Ovary (tissue), 10 donors: ENCODE measurements at regions of chr2 and their contacts with region 1.

Region 1: GRCh38 chr2:240560480-240561326 is 546 bp downstream of the DUSP28 start:
- DNase-seq: peak; percentile 100
- H3K4me3 ChIP-seq: peak overlapping the region; percentile 98
- H3K27ac ChIP-seq: peak overlapping the region; percentile 97 to 98
- H3K4me1 ChIP-seq: peaks cover 23% of the 10 kb centered on the region
- H3K27me3 ChIP-seq: no peaks in the 10 kb centered on the region
- CTCF ChIP-seq: peak; percentile 23 to 46 (median 42)
- EP300 ChIP-seq: no peak
- POLR2A ChIP-seq: peak; percentile 48

Region 2: DNA sequence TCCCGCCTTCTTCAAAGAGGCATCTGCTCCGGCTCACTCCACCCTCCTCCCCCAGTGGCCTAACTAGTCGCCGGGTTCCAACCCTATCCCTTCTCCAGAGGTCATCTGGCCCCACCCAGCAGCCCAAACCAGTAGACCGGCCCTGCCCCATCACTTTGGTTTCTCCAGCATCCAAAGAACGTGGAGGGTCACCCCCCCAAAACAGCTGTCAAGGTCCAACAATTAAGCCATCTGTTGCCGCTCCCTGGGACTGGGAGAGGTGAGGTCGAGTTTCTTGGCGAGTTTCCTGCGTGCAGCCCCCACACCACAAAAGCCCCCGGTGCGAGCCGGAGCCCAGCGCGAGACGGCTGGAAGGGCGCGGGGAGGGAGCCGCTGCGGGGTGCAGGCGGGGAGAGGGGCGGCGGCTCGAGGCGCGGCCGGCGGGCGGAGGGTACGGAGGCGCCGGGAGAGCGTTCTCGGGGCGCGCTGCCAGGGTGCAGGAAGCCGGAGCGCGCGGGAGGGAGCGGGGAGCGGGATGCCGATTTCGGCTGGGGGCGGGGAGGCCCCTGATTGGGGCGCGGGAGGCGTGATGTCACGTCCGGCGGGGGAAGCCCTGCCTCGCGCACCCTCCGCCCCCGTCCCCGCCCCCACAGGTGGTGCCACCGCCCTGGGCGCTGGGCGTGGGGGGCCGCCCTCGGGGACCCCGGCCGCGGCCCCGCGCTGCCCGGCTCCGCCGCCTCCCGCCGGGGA is 125.8 kb before region 1 on chr2:
- intact Hi-C with region 1: loop called in 1 of 4 experiments (anchors 5 kb)
- DNase-seq: peak; percentile 97 to 98 (median 98)
- H3K4me3 ChIP-seq: peak overlapping the region; percentile 66
- H3K27ac ChIP-seq: peak overlapping the region; percentile 79 to 91
- H3K4me1 ChIP-seq: peaks cover 17% of the 10 kb centered on the region
- H3K27me3 ChIP-seq: no peaks in the 10 kb centered on the region
- CTCF ChIP-seq: no peak
- EP300 ChIP-seq: no peak
- POLR2A ChIP-seq: peak; percentile 25

Region 3: GRCh38 chr2:240453961-240454837 is 106.5 kb before region 1 on chr2:
- intact Hi-C with region 1: loop called in 1 of 4 experiments (anchors 1 kb)
- DNase-seq: peak in 3 of 5 donors; percentile 20 to 52 (median 50)
- H3K4me3 ChIP-seq: peak overlapping the region; percentile 28
- H3K27ac ChIP-seq: peak overlapping the region in 1 of 2 donors; percentile 70
- H3K4me1 ChIP-seq: peaks cover 19% of the 10 kb centered on the region
- H3K27me3 ChIP-seq: no peaks in the 10 kb centered on the region
- CTCF ChIP-seq: no peak
- EP300 ChIP-seq: no peak
- POLR2A ChIP-seq: no peak

Region 4: DNA sequence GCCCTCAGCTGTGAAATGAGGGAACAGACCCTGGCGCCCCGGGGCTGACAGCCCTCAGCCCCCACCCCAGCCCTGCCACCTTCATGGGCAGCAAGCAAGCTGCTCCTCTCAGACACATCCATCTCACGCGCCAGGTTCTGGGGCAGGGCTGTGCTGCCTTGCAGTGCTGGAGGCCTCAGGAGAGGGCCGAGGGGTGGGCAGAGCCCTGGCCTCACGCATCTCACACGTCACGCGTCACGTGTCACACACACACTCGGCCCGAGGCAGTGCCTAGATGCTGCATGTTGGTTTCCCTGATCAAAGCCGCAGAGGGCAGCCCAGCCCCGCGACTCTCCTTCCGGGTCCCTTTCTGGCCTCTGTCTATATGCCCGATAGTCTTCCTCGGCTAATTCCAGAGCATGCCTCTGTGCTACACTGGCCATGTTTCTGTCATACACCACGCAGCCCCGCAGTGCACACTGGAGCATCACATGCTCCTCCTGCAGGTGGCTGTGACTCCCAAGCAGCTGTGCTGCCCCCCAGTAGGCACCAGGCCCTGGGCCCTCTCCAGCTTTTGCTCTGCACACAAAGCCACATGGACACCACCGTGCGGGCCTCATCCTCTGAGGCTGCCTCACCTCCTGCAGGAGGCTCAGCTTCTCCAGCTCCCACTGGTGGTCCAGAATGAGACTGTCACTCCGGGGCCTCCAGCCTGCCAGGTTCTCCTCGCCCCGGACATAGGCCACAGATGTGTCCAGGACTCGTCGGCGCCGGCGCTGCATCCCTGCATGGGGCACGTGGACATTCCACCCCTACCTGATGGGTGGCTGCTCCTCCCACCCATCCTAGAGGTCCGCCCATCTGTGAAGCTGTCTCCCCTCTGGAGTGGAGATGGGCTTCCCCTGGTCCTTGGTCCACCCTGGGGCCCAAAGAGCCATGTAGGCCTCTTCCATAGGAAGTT is 162.4 kb after region 1 on chr2:
- intact Hi-C with region 1: no loop called
- DNase-seq: no peak
- H3K4me3 ChIP-seq: no peak overlapping the region
- H3K27ac ChIP-seq: no peak overlapping the region
- H3K4me1 ChIP-seq: no peaks in the 10 kb centered on the region
- H3K27me3 ChIP-seq: no peaks in the 10 kb centered on the region
- CTCF ChIP-seq: no peak
- EP300 ChIP-seq: no peak
- POLR2A ChIP-seq: no peak